ENCODE measurements at regions of chr10 and their contacts with region 1.

Region 1: DNA sequence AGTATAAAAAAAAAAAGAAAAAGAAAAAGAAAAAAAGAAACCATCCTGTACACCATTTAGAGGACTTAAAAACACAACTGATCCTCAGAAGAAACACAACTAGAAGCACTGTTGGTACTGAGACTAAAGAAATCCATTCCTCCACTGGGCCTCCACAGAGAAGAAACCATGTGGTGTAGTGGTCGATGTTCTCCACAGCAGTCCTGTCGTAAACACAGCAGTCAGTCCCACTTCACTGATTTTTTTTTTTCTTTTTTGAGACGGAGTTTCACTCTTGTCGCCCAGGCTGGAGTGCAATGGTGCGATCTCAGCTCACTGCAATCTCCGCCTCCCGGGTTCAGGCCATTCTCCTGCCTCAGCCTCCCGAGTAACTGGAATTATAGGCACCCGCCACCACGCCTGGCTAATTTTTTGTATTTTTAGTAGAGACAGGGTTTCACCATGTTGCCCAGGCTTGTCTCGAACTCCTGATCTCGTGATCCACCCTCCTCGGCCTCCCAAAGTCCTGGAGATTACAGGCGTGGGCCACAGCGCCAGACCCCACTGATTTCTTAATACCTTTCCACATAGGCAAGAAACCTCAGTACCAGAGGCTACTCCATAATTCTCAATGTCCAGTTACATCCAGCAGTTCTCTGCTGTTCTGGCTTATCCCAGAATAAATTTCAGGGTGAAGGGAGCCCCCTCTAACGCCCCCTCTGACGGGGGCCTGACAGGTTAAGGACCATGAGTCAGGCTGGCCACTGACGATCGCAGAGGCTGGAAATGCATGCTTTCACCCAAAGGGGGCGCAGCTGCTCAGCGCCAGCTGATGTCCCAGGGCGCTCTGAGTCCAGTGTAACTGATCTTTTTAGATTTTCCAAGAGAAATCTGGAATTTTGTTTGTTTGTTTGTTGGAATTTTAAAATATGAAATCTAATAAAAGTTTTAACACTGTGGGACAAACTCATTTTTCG is 24.8 kb upstream of the FFAR4 start:
- ATAC-seq: peak; percentile 70 to 99 (median 80)
- H3K4me3 ChIP-seq: no peak overlapping the region
- H3K27ac ChIP-seq: no peak overlapping the region
- H3K4me1 ChIP-seq: no peaks in the 10 kb centered on the region

Region 2: DNA sequence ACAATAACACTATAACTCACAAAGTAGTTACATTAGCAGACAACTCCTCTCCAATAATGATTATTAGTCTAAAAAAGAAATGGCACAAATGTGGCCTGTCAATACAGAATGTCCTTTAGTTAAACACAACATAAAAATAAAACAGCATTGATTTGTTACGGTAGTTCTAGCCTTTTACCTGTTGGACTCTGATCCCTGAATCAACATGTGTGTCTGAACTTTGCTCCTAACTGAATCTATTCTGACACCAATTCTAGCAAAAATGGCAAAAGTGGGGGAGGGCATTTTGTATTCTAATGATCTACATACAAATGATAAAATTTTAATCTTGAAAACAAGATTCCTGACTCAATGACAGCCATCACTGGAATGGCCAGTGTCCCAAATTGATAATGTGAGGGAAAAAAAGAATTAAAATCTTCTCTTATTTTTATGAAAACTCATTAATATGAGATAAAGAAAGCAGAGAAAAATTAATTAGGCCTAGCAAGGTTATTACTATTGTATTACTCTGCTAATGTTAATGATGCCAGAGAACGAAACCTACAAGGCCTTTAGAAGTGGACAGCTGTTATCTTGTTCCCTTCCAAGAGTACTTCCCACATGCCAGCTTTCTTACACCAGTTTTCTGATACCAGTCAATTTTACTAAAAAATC is 130.5 kb after region 1 on chr10:
- in situ Hi-C with region 1: loop called in 1 of 9 experiments (anchors 10 kb)
- ATAC-seq: no peak
- H3K4me3 ChIP-seq: no peak overlapping the region
- H3K27ac ChIP-seq: no peak overlapping the region
- H3K4me1 ChIP-seq: no peaks in the 10 kb centered on the region